ENCODE measurements at regions of chr16 and their contacts with region 1.

Region 1: DNA sequence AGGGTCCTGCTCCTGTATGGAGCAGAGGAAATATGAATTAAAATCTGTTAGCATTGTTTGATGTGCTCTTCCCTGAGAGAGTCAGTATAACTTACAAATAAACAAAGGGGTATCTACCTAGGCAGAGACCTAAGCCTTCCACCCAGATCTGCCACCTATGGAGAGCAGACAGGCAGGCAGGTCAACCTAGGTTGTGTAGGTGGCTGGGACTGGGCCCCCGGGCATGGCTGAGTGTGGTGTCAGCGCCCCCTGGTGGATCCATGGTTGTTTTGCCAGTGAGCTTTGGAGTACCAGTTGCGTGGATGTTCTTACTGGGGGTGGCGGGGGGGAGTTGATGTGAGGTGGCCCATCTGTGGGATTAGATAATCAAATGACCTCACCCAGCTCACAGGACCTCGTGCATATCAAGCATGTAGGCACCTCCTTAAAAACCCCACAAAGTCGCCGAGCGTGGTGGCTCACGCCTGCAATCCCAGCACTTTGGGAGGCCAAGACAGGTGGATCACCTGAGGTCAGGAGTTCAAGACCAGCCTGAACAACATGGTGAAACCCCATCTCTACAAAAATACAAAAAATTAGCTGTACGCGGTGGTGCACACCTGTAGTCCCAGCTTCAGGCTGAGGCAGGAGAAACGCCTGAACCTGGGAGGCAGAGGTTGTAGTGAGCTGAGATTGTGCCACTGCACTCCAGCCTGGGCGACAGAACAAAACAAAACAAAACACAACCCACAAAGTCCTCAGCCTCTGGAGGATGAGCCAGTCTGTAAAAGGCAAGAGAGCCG is 17.6 kb downstream of the DUS2 start:
- DNase-seq: peak; percentile 93
- ATAC-seq: peak; percentile 100
- H3K4me3 Mint-ChIP-seq: no peak overlapping the region
- H3K27ac Mint-ChIP-seq: peak overlapping the region; percentile 86
- H3K4me1 Mint-ChIP-seq: no peaks in the 10 kb centered on the region
- H3K27me3 Mint-ChIP-seq: no peaks in the 10 kb centered on the region
- CTCF ChIP-seq: peak; percentile 88

Region 2: DNA sequence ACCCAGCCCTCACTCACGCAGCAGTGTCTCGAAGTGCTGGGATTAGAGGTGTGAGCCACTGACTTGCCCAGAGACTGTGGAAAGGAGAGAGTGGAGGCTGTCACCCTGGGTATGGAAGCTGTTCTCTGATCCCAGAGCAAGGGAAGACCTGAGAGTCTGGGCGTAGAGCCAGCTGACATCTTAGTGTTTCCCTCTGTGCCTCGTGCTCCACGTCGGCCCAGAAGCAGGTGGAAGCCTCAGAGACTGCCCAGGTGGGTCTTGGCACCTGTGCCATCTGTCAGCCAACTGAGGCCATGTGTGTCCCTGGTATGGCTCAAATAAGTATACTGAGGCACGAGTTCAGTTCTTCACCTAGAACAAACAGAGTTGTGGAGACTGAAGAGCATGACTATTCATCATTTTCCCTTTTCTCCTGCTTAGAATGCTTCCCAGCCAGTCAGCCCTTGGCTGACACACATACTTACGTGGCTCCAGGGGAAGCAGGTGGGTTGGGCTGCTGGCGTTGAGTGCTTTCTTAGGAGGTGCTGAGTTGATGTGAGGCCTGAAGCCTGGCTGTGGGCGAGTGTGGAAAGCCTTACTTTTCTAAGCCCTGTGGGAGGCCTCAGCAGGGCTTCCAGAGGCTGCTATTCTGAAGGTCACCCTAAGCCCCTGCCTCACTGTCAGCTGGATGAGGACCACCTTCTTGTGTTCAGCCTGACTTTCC is 117.1 kb before region 1 on chr16:
- CTCF ChIA-PET with region 1: no interaction called
- POLR2A ChIA-PET with region 1: no interaction called
- DNase-seq: no peak
- ATAC-seq: no peak
- H3K4me3 Mint-ChIP-seq: no peak overlapping the region
- H3K27ac Mint-ChIP-seq: no peak overlapping the region
- H3K4me1 Mint-ChIP-seq: peaks cover 21% of the 10 kb centered on the region
- H3K27me3 Mint-ChIP-seq: no peaks in the 10 kb centered on the region; the same call in 1 of the 2 replicates
- CTCF ChIP-seq: no peak

Region 3: DNA sequence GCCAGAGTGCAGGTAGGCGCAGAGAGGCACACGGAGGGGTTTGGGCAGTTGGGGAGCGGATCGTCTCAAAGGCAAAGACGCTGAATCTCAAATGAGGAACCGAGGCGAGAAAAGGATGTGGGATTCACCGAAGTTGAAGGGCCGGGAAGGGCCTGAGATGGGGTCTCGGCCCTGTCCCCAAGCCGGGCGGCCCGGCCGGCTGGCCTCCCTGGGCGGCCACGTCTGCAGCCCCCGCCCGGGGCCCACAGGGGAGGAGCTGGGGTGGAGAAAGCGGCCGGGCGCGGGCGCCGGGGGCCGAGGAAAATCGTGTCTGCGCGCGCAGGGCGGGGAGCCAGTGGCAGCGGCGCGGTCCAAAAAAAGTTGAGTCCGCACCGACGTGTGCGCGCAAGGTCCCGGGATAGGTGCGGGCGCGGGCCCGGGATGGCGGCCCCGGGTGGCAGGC is 72.7 kb before region 1 on chr16:
- CTCF ChIA-PET with region 1: interaction called, 25 read pairs
- POLR2A ChIA-PET with region 1: no interaction called
- DNase-seq: peak; percentile 38
- ATAC-seq: no peak
- H3K4me3 Mint-ChIP-seq: peak overlapping the region; percentile 97
- H3K27ac Mint-ChIP-seq: peak overlapping the region; percentile 92; the same call in 1 of the 2 replicates
- H3K4me1 Mint-ChIP-seq: peaks cover 44% of the 10 kb centered on the region
- H3K27me3 Mint-ChIP-seq: peaks cover 5% of the 10 kb centered on the region; the same call in 1 of the 2 replicates
- CTCF ChIP-seq: no peak

Region 4: GRCh38 chr16:67993189-67994039 is 47.3 kb before region 1 on chr16:
- CTCF ChIA-PET with region 1: interaction called, 10 read pairs
- POLR2A ChIA-PET with region 1: no interaction called
- DNase-seq: peak; percentile 83
- ATAC-seq: peak; percentile 89
- H3K4me3 Mint-ChIP-seq: no peak overlapping the region
- H3K27ac Mint-ChIP-seq: no peak overlapping the region
- H3K4me1 Mint-ChIP-seq: no peaks in the 10 kb centered on the region
- H3K27me3 Mint-ChIP-seq: peaks cover 20% of the 10 kb centered on the region
- CTCF ChIP-seq: peak; percentile 100

Region 5: DNA sequence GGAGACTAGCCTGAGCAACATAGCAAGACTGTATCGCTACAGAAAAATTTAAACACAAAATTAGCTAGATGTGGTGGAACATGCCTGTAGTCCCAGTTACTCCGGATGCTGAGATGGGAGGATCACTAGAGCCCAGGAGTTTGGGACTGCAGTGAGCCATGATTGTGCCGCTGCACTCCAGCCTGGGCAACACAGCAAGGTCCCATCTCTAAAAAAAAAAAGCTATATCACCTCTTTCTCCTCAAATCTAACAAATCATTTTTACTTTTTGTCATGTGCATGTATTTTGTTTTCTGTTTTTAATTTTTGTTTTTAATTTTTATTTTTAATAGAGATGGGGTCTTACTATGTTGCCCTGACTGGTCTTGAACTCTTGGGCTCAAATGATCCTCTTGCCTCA is 11.7 kb before region 1 on chr16:
- CTCF ChIA-PET with region 1: interaction called, 19 read pairs
- POLR2A ChIA-PET with region 1: interaction called, 9 read pairs
- DNase-seq: no peak
- ATAC-seq: no peak
- H3K4me3 Mint-ChIP-seq: no peak overlapping the region
- H3K27ac Mint-ChIP-seq: no peak overlapping the region
- H3K4me1 Mint-ChIP-seq: 0 out of 2 replicates have a peak, but pooled peaks cover 3% of the 10 kb centered on the region
- H3K27me3 Mint-ChIP-seq: no peaks in the 10 kb centered on the region
- CTCF ChIP-seq: no peak

Measured in WTC11 (cell line).